ENCODE measurements at regions of chr2 and their contacts with region 1.

Region 1: GRCh38 chr2:18998491-18998890 is 359.9 kb downstream of the OSR1 start:
- DNase-seq: no peak
- ATAC-seq: no peak

Region 2: GRCh38 chr2:18544171-18544570 is 454.3 kb before region 1 on chr2:
- intact Hi-C with region 1: loop called (anchors 5 kb)
- DNase-seq: no peak
- ATAC-seq: no peak

Region 3: DNA sequence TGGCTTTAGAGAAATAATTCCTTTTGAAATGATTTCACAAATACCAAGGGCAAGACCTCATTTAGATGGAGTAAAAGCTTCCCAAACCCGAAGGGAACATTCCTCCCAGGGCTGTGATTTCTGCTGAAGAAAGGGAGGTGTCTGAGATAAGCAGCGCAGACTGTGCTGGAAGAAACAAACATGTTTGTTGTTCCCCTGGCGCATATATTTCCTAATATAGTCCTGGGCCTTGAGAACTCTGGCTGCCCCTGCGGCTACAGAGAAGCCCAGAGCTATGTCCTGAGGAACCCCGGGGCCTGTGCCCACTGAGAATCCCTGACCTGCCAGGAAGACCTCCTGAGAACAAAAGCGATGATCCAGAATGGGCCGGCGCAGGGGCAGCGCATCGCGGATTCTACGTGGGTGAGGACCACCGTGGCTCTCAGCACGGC is 36.5 kb before region 1 on chr2:
- intact Hi-C with region 1: no loop called
- DNase-seq: no peak
- ATAC-seq: peak; percentile 87

Region 4: DNA sequence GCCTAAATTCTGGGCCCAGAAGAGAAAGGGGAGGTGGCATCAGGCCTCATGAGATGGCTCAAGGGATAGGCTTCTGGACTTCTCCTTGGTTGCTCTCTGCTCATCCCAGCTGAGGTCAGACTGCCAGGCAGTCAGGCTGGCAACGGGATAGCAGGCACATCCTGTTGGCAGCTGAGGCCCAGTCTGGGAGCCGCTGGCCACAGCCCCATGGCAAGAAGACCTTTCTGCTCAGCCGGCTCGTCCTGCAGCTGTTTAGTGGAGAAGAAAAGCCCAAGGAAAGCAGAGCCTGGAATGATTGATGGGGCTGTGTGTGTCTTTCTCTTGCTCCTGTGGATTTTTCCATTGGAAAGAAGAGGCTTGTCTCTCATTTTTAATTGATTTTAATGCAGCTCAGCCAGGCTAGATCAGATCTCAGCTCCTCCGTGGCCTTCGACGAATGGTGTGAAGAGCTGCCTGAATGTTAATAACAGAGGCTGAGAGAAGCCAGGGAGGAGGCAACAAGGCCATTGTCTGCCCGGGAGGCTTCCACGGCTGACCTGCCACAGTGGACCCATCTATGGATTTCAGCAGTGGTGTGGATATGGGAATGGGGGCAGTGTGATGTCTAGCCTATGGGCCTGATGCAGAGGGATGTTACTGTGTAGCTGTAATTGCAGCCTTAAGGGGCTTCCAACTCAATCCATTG is 1552.9 kb after region 1 on chr2:
- intact Hi-C with region 1: no loop called
- DNase-seq: no peak
- ATAC-seq: peak; percentile 59